AG04449 (cell line): ENCODE measurements at regions of chr18 and their contacts with region 1.

Region 1: DNA sequence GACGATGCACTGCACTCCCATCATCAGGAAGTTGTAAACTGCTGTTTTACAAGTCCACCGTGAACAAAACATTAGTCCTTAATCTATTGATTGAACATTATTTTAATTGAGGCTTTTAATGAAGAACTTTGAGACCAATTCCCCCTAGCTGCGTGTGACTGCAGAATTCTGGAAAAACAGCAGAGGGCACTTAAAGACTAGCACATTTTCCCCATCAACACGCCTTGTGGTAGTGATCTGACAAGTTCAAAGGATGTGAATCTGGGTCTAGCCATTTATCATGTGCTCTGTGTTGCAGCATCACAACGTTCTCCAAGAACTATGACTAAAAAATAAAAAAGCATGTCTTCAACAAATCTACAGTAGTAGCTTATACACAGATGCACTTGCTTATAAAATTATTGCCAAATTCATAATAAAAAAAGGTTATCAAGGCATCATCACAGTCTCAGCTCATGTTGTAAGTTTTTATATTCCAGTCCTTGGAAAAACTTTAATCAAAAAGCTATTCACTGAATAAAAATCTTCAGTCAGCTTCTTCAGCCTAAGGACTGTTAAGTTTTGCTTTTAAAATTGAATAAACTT is 35.8 kb downstream of the SKOR2 start:
- DNase-seq: peak; percentile 33
- H3K4me3 ChIP-seq: no peak overlapping the region
- CTCF ChIP-seq: peak; percentile 58

Region 2: GRCh38 chr18:46793565-46793964 is 422.1 kb before region 1 on chr18:
- CTCF ChIA-PET with region 1: no interaction called
- POLR2A ChIA-PET with region 1: no interaction called
- DNase-seq: no peak
- H3K4me3 ChIP-seq: no peak overlapping the region
- CTCF ChIP-seq: no peak

Region 3: GRCh38 chr18:46809145-46809544 is 406.5 kb before region 1 on chr18:
- CTCF ChIA-PET with region 1: no interaction called
- POLR2A ChIA-PET with region 1: no interaction called
- DNase-seq: no peak
- H3K4me3 ChIP-seq: no peak overlapping the region
- CTCF ChIP-seq: no peak

Region 4: DNA sequence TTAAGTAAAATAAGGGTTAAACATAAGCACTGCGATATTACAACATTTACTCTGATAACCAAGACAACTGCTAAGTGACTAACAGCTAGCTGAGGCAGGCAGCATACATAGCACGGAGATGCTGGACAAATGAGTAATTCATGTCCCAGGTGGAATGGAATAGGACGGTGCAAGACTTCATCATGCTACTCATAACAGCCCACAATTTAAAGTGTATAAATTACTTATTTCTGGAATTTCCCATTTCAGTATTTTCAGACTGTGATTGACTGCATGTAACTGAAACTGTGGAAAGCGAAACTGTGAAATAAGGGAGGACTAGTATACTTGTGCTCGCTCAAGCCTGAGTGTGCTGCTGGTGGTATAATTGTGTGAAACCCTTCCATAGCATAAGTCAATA is 52.4 kb before region 1 on chr18:
- CTCF ChIA-PET with region 1: no interaction called
- POLR2A ChIA-PET with region 1: no interaction called
- DNase-seq: peak; percentile 24
- H3K4me3 ChIP-seq: no peak overlapping the region
- CTCF ChIP-seq: no peak

Region 5: GRCh38 chr18:47737956-47738355 is 522.3 kb after region 1 on chr18:
- CTCF ChIA-PET with region 1: interaction called, 15 read pairs
- POLR2A ChIA-PET with region 1: no interaction called
- DNase-seq: no peak
- H3K4me3 ChIP-seq: no peak overlapping the region
- CTCF ChIP-seq: no peak

Region 6: DNA sequence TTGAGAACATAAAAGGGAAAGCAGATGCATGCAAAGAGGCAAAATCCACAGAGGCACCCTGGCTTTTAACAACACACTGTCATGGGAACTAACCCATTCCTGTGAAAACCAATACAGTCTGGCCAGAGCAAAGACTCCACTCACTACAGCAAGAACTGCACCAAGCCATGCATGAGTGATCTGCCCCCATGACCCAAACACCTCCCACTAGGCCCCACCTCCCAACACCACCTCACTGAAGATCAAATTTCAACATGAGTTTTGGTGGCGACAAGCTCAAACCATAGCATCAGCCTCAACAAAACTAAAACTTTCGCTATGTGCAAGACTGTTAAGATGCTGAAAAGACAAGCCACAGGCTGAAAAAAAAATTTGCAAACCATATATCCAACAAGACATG is 552.1 kb after region 1 on chr18:
- CTCF ChIA-PET with region 1: no interaction called
- POLR2A ChIA-PET with region 1: no interaction called
- DNase-seq: no peak
- H3K4me3 ChIP-seq: no peak overlapping the region
- CTCF ChIP-seq: no peak